CD14-positive monocyte (primary cell): ENCODE measurements at regions of chr17 and their contacts with region 1.

Region 1: GRCh38 chr17:34248511-34249024 is 6.5 kb upstream of the CCL2 start:
- DNase-seq: peak; percentile 80 to 93 (median 90)
- H3K4me3 ChIP-seq: peak overlapping the region in 1 of 3 experiments; percentile 6
- H3K4me3 Mint-ChIP-seq: peak overlapping the region in 1 of 2 donors; percentile 63
- H3K27ac ChIP-seq: peak overlapping the region; percentile 71 to 94
- H3K27ac Mint-ChIP-seq: no peak overlapping the region
- H3K4me1 ChIP-seq: peaks cover 89 to 92% of the 10 kb centered on the region in 2 donors
- H3K4me1 Mint-ChIP-seq: peaks cover 26% of the 10 kb centered on the region
- H3K27me3 ChIP-seq: no peaks in the 10 kb centered on the region
- H3K27me3 Mint-ChIP-seq: peaks cover 0 to 11% (median 0%) of the 10 kb centered on the region in 3 donors
- CTCF ChIP-seq: no peak

Region 2: DNA sequence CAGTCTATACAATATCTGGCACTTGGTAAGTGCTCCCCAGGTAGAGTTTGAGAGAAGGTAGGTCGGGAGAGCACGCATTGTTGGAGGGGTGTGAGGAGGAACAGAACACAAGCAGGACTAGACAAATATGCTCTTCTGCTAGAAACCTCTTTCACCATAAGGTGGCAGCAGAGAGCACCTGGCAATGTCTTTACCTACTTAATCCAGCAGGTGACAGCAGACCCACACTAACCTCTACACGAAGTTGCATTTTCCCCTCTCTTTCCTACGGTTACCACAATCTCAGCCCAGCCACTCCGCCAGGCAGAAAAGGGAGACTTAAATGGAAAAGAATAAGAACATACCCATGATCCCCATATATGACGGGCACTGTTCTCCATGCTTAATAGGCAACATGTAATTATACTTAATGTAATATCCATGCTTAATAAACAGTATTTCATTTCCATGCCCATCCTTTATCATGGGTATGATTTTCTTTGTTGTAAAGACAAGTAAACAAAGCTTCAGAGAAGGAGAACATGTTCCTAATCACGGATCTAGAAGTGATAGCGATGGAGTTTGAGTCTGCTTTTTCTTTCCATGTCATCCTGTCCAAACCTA is 48.5 kb before region 1 on chr17:
- intact Hi-C with region 1: loop called (anchors 2 to 5 kb)
- DNase-seq: peak; percentile 79 to 88 (median 87)
- H3K4me3 ChIP-seq: no peak overlapping the region
- H3K4me3 Mint-ChIP-seq: no peak overlapping the region
- H3K27ac ChIP-seq: peak overlapping the region in 1 of 2 donors; percentile 3
- H3K27ac Mint-ChIP-seq: peak overlapping the region in 4 of 7 donors; percentile 12 to 59 (median 36)
- H3K4me1 ChIP-seq: peaks cover 18 to 19% of the 10 kb centered on the region in 2 donors
- H3K4me1 Mint-ChIP-seq: peaks cover 23% of the 10 kb centered on the region
- H3K27me3 ChIP-seq: peaks cover 0 to 2% of the 10 kb centered on the region in 2 donors
- H3K27me3 Mint-ChIP-seq: peaks cover 0 to 11% (median 5%) of the 10 kb centered on the region in 3 donors
- CTCF ChIP-seq: peak; percentile 100

Region 3: GRCh38 chr17:34220754-34221395 is 27.7 kb before region 1 on chr17:
- intact Hi-C with region 1: loop called in 1 of 2 experiments (anchors 2 kb)
- DNase-seq: peak; percentile 66 to 86 (median 82)
- H3K4me3 ChIP-seq: peak overlapping the region in 1 of 3 experiments; percentile 26
- H3K4me3 Mint-ChIP-seq: peak overlapping the region; percentile 4 to 47
- H3K27ac ChIP-seq: peak overlapping the region; percentile 35 to 60
- H3K27ac Mint-ChIP-seq: peak overlapping the region; percentile 25 to 95 (median 91)
- H3K4me1 ChIP-seq: peaks cover 60 to 61% of the 10 kb centered on the region in 2 donors
- H3K4me1 Mint-ChIP-seq: peaks cover 66% of the 10 kb centered on the region
- H3K27me3 ChIP-seq: no peaks in the 10 kb centered on the region
- H3K27me3 Mint-ChIP-seq: peaks cover 0 to 3% (median 3%) of the 10 kb centered on the region in 3 donors
- CTCF ChIP-seq: no peak

Region 4: DNA sequence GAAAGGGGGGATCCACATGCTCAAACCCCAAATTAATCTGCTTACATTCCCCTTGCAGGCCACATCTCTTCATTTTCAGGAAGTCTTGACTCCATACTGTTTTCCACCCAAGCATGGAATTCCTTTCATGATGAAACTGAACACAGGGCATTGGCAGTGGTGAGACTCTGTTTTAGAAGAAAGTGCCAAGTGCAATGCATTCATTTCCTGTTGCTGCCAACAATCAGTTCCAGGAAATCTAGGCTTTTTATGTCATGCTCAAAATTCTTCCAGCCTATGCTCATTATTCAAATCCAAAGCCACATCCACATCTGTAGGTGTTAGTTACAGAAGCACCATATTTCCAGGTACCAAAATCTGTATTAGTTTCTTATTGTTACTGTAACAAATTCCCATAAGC is 10.6 kb after region 1 on chr17:
- intact Hi-C with region 1: no loop called
- DNase-seq: no peak
- H3K4me3 ChIP-seq: no peak overlapping the region
- H3K4me3 Mint-ChIP-seq: no peak overlapping the region
- H3K27ac ChIP-seq: no peak overlapping the region
- H3K27ac Mint-ChIP-seq: no peak overlapping the region
- H3K4me1 ChIP-seq: peaks cover 30% of the 10 kb centered on the region in 2 donors
- H3K4me1 Mint-ChIP-seq: peaks cover 37% of the 10 kb centered on the region
- H3K27me3 ChIP-seq: no peaks in the 10 kb centered on the region
- H3K27me3 Mint-ChIP-seq: peaks cover 0 to 3% (median 2%) of the 10 kb centered on the region in 3 donors
- CTCF ChIP-seq: no peak

Region 5: DNA sequence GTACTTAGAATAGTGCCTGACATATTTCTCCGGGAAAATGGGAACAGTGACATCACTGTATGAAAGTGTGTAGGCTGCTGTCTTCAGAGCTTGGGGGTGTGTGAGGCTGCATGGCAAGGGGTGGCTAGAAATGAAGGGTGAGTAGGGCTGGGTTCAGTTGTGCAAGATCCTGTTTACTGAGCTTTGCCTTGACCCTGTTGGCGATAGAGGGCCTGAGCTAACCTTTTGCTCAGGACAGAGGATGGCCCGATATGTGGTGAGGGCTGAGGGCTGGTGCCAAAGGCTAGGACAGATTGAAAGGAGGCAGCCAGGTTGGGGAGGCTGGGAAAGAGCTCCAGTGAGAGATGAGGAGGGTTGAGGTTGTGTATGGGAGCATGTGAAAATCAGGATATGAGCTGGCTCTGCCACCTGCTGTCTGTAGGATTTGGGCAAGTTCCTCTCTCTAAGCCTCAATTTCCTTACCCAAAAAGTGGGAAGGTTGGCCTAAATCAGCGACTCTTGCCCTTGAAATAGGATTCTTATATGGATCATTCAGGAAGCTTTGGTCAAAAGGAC is 120.5 kb after region 1 on chr17:
- intact Hi-C with region 1: loop called in 1 of 2 experiments (anchors 5 kb)
- DNase-seq: peak; percentile 53 to 74 (median 73)
- H3K4me3 ChIP-seq: peak overlapping the region in 1 of 3 experiments; percentile 58
- H3K4me3 Mint-ChIP-seq: no peak overlapping the region
- H3K27ac ChIP-seq: peak overlapping the region; percentile 81 to 85
- H3K27ac Mint-ChIP-seq: no peak overlapping the region
- H3K4me1 ChIP-seq: peaks cover 76 to 84% of the 10 kb centered on the region in 2 donors
- H3K4me1 Mint-ChIP-seq: peaks cover 10% of the 10 kb centered on the region
- H3K27me3 ChIP-seq: no peaks in the 10 kb centered on the region
- H3K27me3 Mint-ChIP-seq: no peaks in the 10 kb centered on the region
- CTCF ChIP-seq: no peak